Activated naive CD4-positive, alpha-beta T cell treated with anti-CD3 and anti-CD28 coated beads for 36 hours (primary cell): ENCODE measurements at regions of chr2 and their contacts with region 1.

Region 1: DNA sequence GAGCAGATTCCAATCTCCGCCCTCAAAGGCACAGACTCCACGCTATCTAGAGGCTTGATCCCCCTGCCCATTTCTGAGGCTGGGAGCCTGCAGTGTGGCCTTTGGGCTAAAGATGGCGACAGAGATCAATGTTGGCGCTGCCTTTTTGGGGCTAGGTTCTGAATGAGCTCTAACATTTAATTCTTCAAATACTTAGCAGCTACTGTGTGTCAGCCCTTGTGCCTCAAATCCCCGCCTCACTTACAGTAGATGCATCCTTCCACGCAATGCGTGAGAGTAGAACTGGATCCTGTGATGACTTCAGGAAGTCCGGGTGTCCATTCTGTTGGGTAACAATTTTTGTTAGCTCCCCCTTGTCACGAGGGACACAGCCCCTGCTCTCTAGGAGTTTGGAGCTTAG is 12.4 kb downstream of the IL1F10 start:
- DNase-seq: peak; percentile 73
- H3K4me3 Mint-ChIP-seq: no peak overlapping the region
- H3K27ac Mint-ChIP-seq: no peak overlapping the region
- H3K4me1 Mint-ChIP-seq: peaks cover 12% of the 10 kb centered on the region
- H3K27me3 Mint-ChIP-seq: no peaks in the 10 kb centered on the region

Region 2: GRCh38 chr2:113012436-113013335 is 67.4 kb before region 1 on chr2:
- CTCF ChIA-PET with region 1: no interaction called
- intact Hi-C with region 1: no loop called
- DNase-seq: no peak
- H3K4me3 Mint-ChIP-seq: no peak overlapping the region
- H3K27ac Mint-ChIP-seq: no peak overlapping the region
- H3K4me1 Mint-ChIP-seq: peaks cover 20% of the 10 kb centered on the region
- H3K27me3 Mint-ChIP-seq: no peaks in the 10 kb centered on the region

Region 3: DNA sequence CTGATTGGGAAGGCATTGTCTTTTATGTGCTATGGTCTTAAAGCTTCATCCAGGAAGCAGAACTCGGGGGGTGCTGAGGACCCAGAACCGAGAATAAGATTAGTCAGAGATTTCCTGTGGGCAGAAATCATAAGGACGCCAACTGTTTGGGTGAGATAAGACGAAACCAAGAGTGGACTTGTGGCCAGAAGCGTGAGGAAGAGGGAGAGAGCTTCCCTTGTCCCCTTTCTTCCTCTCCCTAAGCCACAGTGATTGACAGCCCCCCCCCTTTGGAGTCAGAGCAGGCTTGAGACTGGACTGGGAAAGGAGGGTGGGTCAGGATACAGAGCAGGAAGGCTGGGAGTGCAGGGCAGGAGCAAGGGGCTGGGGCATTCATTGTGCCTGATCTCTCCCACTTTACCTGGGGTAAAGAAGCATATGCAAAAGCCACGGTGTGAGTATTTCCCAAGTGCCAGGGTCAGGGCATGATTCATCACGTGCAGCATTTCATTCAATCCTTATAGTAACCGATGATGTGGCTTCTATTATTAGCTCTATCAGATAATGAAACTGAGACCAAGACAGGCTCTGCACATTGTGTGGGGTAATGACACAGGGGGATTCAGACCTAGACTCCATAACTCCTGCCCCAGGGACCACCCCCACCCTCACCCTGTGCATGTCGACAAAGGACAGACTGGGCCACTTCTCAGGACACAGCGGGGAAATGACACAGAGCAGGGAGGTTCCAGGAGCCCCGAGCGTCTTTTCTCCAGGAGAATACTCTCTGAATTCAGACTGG is 44.2 kb after region 1 on chr2:
- CTCF ChIA-PET with region 1: interaction called, 10 read pairs
- intact Hi-C with region 1: loop called (anchors 5 kb)
- DNase-seq: peak; percentile 40
- H3K4me3 Mint-ChIP-seq: no peak overlapping the region
- H3K27ac Mint-ChIP-seq: no peak overlapping the region
- H3K4me1 Mint-ChIP-seq: peaks cover 23% of the 10 kb centered on the region
- H3K27me3 Mint-ChIP-seq: no peaks in the 10 kb centered on the region

Region 4: GRCh38 chr2:113198790-113199612 is 118.9 kb after region 1 on chr2:
- CTCF ChIA-PET with region 1: interaction called, 30 read pairs
- intact Hi-C with region 1: loop called (anchors 1 kb)
- DNase-seq: peak; percentile 81
- H3K4me3 Mint-ChIP-seq: no peak overlapping the region
- H3K27ac Mint-ChIP-seq: peak overlapping the region; percentile 16
- H3K4me1 Mint-ChIP-seq: peaks cover 23% of the 10 kb centered on the region
- H3K27me3 Mint-ChIP-seq: no peaks in the 10 kb centered on the region

Region 5: GRCh38 chr2:113248997-113249770 is 169.1 kb after region 1 on chr2:
- CTCF ChIA-PET with region 1: interaction called, 6 read pairs
- intact Hi-C with region 1: loop called (anchors 2 kb)
- DNase-seq: peak; percentile 88
- H3K4me3 Mint-ChIP-seq: no peak overlapping the region
- H3K27ac Mint-ChIP-seq: peak overlapping the region; percentile 37
- H3K4me1 Mint-ChIP-seq: peaks cover 48% of the 10 kb centered on the region
- H3K27me3 Mint-ChIP-seq: no peaks in the 10 kb centered on the region

Region 6: DNA sequence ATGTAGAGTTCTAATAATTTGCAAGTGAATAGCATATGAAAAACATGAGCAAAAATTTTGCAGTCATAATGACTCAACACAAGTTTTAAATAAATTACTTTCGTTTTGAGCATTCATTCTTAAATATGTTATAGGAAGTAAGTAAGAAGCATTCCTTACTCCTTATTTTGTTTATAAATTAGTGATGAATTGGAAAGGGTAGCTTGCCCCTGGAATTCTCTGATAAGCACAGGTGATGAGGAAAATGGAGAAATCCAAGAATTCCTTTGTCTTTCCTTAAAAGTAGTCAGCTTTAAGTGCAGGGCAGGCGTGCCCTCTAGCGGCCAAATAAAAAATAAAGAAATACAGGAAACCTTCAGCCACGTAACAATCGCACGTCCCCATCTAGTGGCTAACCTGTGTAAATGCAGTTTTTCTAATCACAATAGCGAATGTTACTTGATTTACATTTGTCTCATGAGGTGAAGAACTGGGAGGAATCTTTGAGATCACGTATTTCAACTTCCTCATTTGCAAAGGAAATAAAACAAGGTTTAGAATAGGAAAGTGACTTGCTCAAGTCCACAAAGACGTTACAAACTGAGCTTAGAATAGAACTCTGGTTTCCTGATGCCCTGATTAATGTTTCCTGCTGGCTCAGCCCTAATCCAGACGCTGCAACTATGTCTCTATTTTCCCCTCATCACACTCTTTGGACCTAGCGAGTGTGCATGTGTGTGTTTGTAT is 310.2 kb after region 1 on chr2:
- CTCF ChIA-PET with region 1: interaction called, 7 read pairs
- intact Hi-C with region 1: loop called (anchors 5 kb)
- DNase-seq: peak; percentile 70
- H3K4me3 Mint-ChIP-seq: peak overlapping the region; percentile 35
- H3K27ac Mint-ChIP-seq: peak overlapping the region; percentile 61
- H3K4me1 Mint-ChIP-seq: peaks cover 15% of the 10 kb centered on the region
- H3K27me3 Mint-ChIP-seq: peaks cover 3% of the 10 kb centered on the region

Region 7: GRCh38 chr2:113831161-113831560 is 751.0 kb after region 1 on chr2:
- CTCF ChIA-PET with region 1: no interaction called
- intact Hi-C with region 1: no loop called
- DNase-seq: no peak
- H3K4me3 Mint-ChIP-seq: no peak overlapping the region
- H3K27ac Mint-ChIP-seq: no peak overlapping the region
- H3K4me1 Mint-ChIP-seq: no peaks in the 10 kb centered on the region
- H3K27me3 Mint-ChIP-seq: no peaks in the 10 kb centered on the region